Heart right ventricle (tissue), 16 donors: ENCODE measurements at regions of chr9 and their contacts with region 1.

Region 1: DNA sequence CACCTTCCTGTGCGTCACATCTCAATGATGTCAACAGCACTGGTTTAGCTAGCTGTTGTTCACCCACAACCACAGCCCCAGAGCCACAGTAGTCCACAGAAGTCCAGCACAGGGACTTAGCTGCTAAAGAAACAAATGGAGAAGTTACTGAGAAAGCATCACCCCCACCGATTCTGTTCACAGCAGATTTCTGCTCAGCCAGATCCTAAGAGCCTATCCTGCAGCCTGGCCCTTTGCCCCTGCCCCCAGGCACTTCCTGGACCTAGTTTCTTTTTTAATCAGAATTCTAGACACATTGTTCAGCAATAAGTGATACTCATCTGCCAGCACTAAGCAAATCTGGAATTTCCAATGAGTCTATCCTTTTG is 7.4 kb downstream of the B4GALT1 start:
- DNase-seq: peak; percentile 55 to 58
- ATAC-seq: peak in 7 of 8 donors; percentile 6 to 35 (median 19)
- H3K4me3 ChIP-seq: peak overlapping the region in 4 of 10 donors; percentile 0 to 26 (median 12)
- H3K27ac ChIP-seq: peak overlapping the region; percentile 68 to 100 (median 99)
- H3K4me1 ChIP-seq: peaks cover 53 to 100% (median 99%) of the 10 kb centered on the region in 9 donors
- H3K27me3 ChIP-seq: no peaks in the 10 kb centered on the region
- CTCF ChIP-seq: no peak

Region 2: GRCh38 chr9:33106827-33107621 is 52.7 kb before region 1 on chr9:
- intact Hi-C with region 1: loop called in 2 of 10 experiments (anchors 5 to 10 kb)
- DNase-seq: peak; percentile 42 to 78
- ATAC-seq: peak; percentile 60 to 85 (median 72)
- H3K4me3 ChIP-seq: peak overlapping the region in 1 of 10 donors; percentile 1
- H3K27ac ChIP-seq: peak overlapping the region; percentile 9 to 95 (median 82)
- H3K4me1 ChIP-seq: peaks cover 5 to 61% (median 31%) of the 10 kb centered on the region in 9 donors
- H3K27me3 ChIP-seq: no peaks in the 10 kb centered on the region
- CTCF ChIP-seq: no peak

Region 3: DNA sequence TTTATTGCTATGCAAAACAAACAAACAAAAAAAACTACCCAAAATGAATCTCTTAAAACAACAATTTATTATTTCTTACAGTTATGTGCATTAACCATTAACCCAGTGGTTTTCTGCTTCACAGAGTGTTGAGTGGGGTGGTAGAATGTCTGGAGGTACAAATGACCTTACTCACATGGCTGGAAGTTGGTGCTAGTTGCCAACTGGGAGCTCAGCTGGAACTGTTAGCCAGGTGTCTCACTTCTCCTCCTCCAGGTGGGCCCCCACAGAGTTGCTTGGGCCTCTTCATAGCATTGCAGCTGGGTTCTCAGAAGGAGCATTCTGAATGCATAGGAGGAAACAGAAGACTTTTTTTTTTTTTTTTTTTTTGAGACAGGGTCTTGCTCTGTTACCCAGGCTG is 17.9 kb after region 1 on chr9:
- intact Hi-C with region 1: no loop called
- DNase-seq: no peak
- ATAC-seq: no peak
- H3K4me3 ChIP-seq: no peak overlapping the region
- H3K27ac ChIP-seq: no peak overlapping the region
- H3K4me1 ChIP-seq: peaks cover 0 to 26% (median 8%) of the 10 kb centered on the region in 9 donors
- H3K27me3 ChIP-seq: no peaks in the 10 kb centered on the region
- CTCF ChIP-seq: no peak